Naive thymus-derived CD4-positive, alpha-beta T cell (primary cell): ENCODE measurements at regions of chr1 and their contacts with region 1.

Region 1: GRCh38 chr1:101112051-101112780 is 86.6 kb upstream of the DPH5 start:
- DNase-seq: peak; percentile 29 to 95 (median 91)
- ATAC-seq: peak; percentile 97
- H3K4me3 ChIP-seq: peak overlapping the region; percentile 33
- H3K4me3 Mint-ChIP-seq: peak overlapping the region; percentile 32 to 85 (median 78)
- H3K27ac ChIP-seq: peak overlapping the region; percentile 84
- H3K27ac Mint-ChIP-seq: peak overlapping the region; percentile 95 to 100 (median 99)
- H3K4me1 ChIP-seq: peaks cover 23 to 43% of the 10 kb centered on the region in 2 donors
- H3K4me1 Mint-ChIP-seq: peaks cover 32 to 79% (median 71%) of the 10 kb centered on the region in 7 donors
- H3K27me3 ChIP-seq: no peaks in the 10 kb centered on the region
- H3K27me3 Mint-ChIP-seq: no peaks in the 10 kb centered on the region

Region 2: GRCh38 chr1:100265931-100266740 is 846.1 kb before region 1 on chr1 and contains the start of gene RTCA:
- CTCF ChIA-PET with region 1: no interaction called
- POLR2A ChIA-PET with region 1: no interaction called
- intact Hi-C with region 1: no loop called
- DNase-seq: peak; percentile 91 to 95 (median 94)
- ATAC-seq: peak; percentile 98
- H3K4me3 ChIP-seq: peak within 1 kb of the TSS; percentile 88
- H3K4me3 Mint-ChIP-seq: peak within 1 kb of the TSS; percentile 97 to 100 (median 100)
- H3K27ac ChIP-seq: peak within 1 kb of the TSS; percentile 88
- H3K27ac Mint-ChIP-seq: peak within 1 kb of the TSS; percentile 94 to 99 (median 97)
- H3K4me1 ChIP-seq: peaks cover 25 to 26% of the 10 kb centered on the region in 2 donors
- H3K4me1 Mint-ChIP-seq: peaks cover 23 to 58% (median 51%) of the 10 kb centered on the region in 7 donors
- H3K27me3 ChIP-seq: no peaks in the 10 kb centered on the region
- H3K27me3 Mint-ChIP-seq: peaks cover 0 to 3% (median 0%) of the 10 kb centered on the region in 5 donors
- total RNA-seq, gene RTCA: 33.3 to 47.7 (median 35.8) TPM

Region 3: DNA sequence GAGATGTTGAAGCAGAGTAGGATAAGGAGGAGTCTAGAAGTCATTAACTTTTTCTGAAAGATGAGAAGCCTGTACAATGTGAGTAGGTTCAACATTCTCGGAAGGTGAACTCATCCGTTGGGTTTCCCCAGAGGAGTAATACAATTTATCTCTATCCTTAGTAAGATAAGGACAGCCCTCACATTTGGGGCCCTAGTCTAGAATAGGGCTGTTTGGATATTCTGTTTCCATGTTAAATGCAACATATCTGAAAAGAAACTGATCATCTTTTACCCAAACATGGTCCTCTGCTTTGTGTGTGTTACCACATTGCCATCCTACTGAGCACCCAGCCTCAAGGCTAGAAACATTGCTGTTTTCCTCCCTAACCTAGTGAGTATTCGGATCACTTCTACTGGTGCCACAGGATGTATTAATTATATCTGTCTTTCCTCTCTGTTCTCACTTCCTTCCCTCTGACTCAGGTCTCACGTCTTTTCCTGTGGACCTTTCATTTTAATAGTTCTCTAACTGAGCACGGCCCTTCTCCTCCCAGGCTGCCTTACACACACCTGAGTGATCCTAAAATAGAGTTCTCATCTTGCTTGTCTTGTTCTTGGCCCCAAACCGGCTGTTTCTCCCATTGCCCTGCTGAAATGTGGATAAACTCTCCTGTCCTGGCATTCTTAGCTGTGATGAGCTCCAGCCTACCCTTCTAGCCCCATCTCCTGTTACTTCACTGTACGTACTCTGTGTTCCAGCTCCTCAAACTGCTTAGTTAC is 668.2 kb before region 1 on chr1:
- CTCF ChIA-PET with region 1: no interaction called
- POLR2A ChIA-PET with region 1: no interaction called
- intact Hi-C with region 1: loop called in 1 of 2 experiments (anchors 5 kb)
- DNase-seq: peak in 5 of 9 donors; percentile 31 to 42 (median 36)
- ATAC-seq: peak; percentile 6
- H3K4me3 ChIP-seq: peak overlapping the region; percentile 12
- H3K4me3 Mint-ChIP-seq: peak overlapping the region; percentile 66 to 86 (median 81)
- H3K27ac ChIP-seq: peak overlapping the region; percentile 93
- H3K27ac Mint-ChIP-seq: peak overlapping the region; percentile 92 to 99 (median 98)
- H3K4me1 ChIP-seq: peaks cover 83 to 84% of the 10 kb centered on the region in 2 donors
- H3K4me1 Mint-ChIP-seq: peaks cover 53 to 95% (median 87%) of the 10 kb centered on the region in 7 donors
- H3K27me3 ChIP-seq: no peaks in the 10 kb centered on the region
- H3K27me3 Mint-ChIP-seq: no peaks in the 10 kb centered on the region

Region 4: DNA sequence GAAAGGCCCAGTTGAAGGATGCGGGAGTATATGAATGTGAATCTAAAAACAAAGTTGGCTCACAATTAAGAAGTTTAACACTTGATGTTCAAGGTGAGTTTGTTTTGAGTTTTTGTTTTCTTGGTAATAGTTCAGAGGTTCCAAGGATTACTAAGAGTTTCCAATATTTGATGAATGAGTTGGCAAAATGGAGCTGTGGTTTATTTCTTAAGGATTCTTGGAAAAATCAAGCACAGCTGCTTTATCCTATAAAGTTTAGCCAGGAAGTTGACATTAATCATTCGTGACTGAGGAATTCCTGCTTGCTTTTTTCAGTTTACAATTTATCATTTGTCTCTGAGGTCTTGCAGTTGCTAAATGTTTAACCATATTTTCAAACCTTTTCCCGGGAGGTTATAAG is 377.5 kb before region 1 on chr1:
- CTCF ChIA-PET with region 1: no interaction called
- POLR2A ChIA-PET with region 1: no interaction called
- intact Hi-C with region 1: no loop called
- DNase-seq: no peak
- ATAC-seq: no peak
- H3K4me3 ChIP-seq: no peak overlapping the region
- H3K4me3 Mint-ChIP-seq: no peak overlapping the region
- H3K27ac ChIP-seq: no peak overlapping the region
- H3K27ac Mint-ChIP-seq: no peak overlapping the region
- H3K4me1 ChIP-seq: no peaks in the 10 kb centered on the region
- H3K4me1 Mint-ChIP-seq: no peaks in the 10 kb centered on the region
- H3K27me3 ChIP-seq: no peaks in the 10 kb centered on the region
- H3K27me3 Mint-ChIP-seq: peaks cover 5 to 13% (median 8%) of the 10 kb centered on the region in 5 donors

Region 5: GRCh38 chr1:100928128-100928527 is 184.1 kb before region 1 on chr1:
- CTCF ChIA-PET with region 1: interaction called, 6 read pairs
- POLR2A ChIA-PET with region 1: interaction called, 13 read pairs
- intact Hi-C with region 1: loop called (anchors 1 to 2 kb)
- DNase-seq: peak in 1 of 9 donors; percentile 9
- ATAC-seq: peak; percentile 30
- H3K4me3 ChIP-seq: peak overlapping the region; percentile 15
- H3K4me3 Mint-ChIP-seq: no peak overlapping the region
- H3K27ac ChIP-seq: peak overlapping the region; percentile 74
- H3K27ac Mint-ChIP-seq: no peak overlapping the region
- H3K4me1 ChIP-seq: peaks cover 76 to 84% of the 10 kb centered on the region in 2 donors
- H3K4me1 Mint-ChIP-seq: peaks cover 26 to 61% (median 39%) of the 10 kb centered on the region in 7 donors
- H3K27me3 ChIP-seq: no peaks in the 10 kb centered on the region
- H3K27me3 Mint-ChIP-seq: no peaks in the 10 kb centered on the region

Region 6: GRCh38 chr1:101122452-101123166 is 10.4 kb after region 1 on chr1:
- CTCF ChIA-PET with region 1: interaction called, 11 read pairs
- POLR2A ChIA-PET with region 1: interaction called, 19 read pairs
- intact Hi-C with region 1: loop called (anchors 1 kb)
- DNase-seq: peak in 3 of 9 donors; percentile 19 to 32 (median 28)
- ATAC-seq: peak; percentile 66
- H3K4me3 ChIP-seq: no peak overlapping the region
- H3K4me3 Mint-ChIP-seq: peak overlapping the region; percentile 12 to 81 (median 59)
- H3K27ac ChIP-seq: peak overlapping the region; percentile 63
- H3K27ac Mint-ChIP-seq: peak overlapping the region; percentile 36 to 95 (median 91)
- H3K4me1 ChIP-seq: peaks cover 26 to 32% of the 10 kb centered on the region in 2 donors
- H3K4me1 Mint-ChIP-seq: peaks cover 28 to 83% (median 65%) of the 10 kb centered on the region in 7 donors
- H3K27me3 ChIP-seq: no peaks in the 10 kb centered on the region
- H3K27me3 Mint-ChIP-seq: peaks cover 0 to 4% (median 0%) of the 10 kb centered on the region in 5 donors

Region 7: GRCh38 chr1:101136739-101137138 is 24.5 kb after region 1 on chr1:
- CTCF ChIA-PET with region 1: interaction called, 4 read pairs
- POLR2A ChIA-PET with region 1: interaction called, 6 read pairs
- intact Hi-C with region 1: loop called in 1 of 2 experiments (anchors 1 kb)
- DNase-seq: peak in 7 of 9 donors; percentile 11 to 59 (median 45)
- ATAC-seq: peak; percentile 77
- H3K4me3 ChIP-seq: no peak overlapping the region
- H3K4me3 Mint-ChIP-seq: peak overlapping the region in 9 of 10 donors; percentile 23 to 62 (median 49)
- H3K27ac ChIP-seq: peak overlapping the region; percentile 19
- H3K27ac Mint-ChIP-seq: peak overlapping the region; percentile 67 to 93 (median 85)
- H3K4me1 ChIP-seq: peaks cover 17 to 32% of the 10 kb centered on the region in 2 donors
- H3K4me1 Mint-ChIP-seq: peaks cover 37 to 67% (median 66%) of the 10 kb centered on the region in 7 donors
- H3K27me3 ChIP-seq: no peaks in the 10 kb centered on the region
- H3K27me3 Mint-ChIP-seq: no peaks in the 10 kb centered on the region

Region 8: DNA sequence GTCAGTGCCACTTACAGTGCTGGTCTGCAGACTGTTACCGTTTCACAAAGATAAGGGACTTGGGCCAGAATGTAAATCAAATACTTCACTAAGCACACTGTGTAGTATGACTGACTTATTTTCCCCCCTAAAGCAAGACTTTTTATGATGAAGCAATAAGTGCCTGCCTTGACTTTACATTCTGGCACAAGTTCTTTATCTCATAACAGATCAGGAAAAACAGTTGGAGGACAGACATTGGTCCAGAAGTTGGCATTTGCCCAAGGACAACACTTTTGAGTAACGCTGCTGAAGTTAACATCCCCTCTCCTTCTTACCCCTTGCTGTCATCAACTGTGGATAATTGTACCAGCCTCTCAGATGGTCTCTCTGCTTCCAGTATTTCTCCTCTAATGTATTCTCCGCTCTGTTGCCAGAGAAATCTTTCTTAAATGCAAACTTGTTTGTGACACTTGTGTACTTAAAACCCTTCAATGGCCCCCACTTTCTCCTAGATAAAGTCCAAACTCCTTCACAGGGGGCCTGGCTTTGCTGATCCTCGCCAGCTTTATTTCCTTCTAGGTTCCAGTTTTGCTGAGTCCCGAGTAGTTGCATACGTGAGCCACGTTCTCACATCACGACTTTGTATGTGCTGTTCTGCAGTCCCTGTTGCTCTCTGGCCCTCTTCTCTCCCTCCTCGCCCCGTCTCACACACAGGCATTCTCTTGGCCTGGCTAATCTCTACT is 170.3 kb after region 1 on chr1:
- CTCF ChIA-PET with region 1: interaction called, 6 read pairs
- POLR2A ChIA-PET with region 1: interaction called, 5 read pairs
- intact Hi-C with region 1: loop called in 1 of 2 experiments (anchors 1 kb)
- DNase-seq: no peak
- ATAC-seq: no peak
- H3K4me3 ChIP-seq: no peak overlapping the region
- H3K4me3 Mint-ChIP-seq: peak overlapping the region in 7 of 10 donors; percentile 11 to 94 (median 84)
- H3K27ac ChIP-seq: peak overlapping the region; percentile 77
- H3K27ac Mint-ChIP-seq: peak overlapping the region in 8 of 9 donors; percentile 85 to 99 (median 98)
- H3K4me1 ChIP-seq: peaks cover 92 to 95% of the 10 kb centered on the region in 2 donors
- H3K4me1 Mint-ChIP-seq: peaks cover 67 to 96% (median 95%) of the 10 kb centered on the region in 7 donors
- H3K27me3 ChIP-seq: no peaks in the 10 kb centered on the region
- H3K27me3 Mint-ChIP-seq: peaks cover 0 to 2% (median 0%) of the 10 kb centered on the region in 5 donors

Region 9: GRCh38 chr1:101298663-101299062 is 186.4 kb after region 1 on chr1:
- CTCF ChIA-PET with region 1: no interaction called
- POLR2A ChIA-PET with region 1: no interaction called
- intact Hi-C with region 1: no loop called
- DNase-seq: no peak
- ATAC-seq: peak; percentile 62
- H3K4me3 ChIP-seq: no peak overlapping the region
- H3K4me3 Mint-ChIP-seq: no peak overlapping the region
- H3K27ac ChIP-seq: no peak overlapping the region
- H3K27ac Mint-ChIP-seq: peak overlapping the region in 1 of 9 donors; percentile 5
- H3K4me1 ChIP-seq: peaks cover 0 to 1% of the 10 kb centered on the region in 2 donors
- H3K4me1 Mint-ChIP-seq: peaks cover 2 to 33% (median 16%) of the 10 kb centered on the region in 7 donors
- H3K27me3 ChIP-seq: no peaks in the 10 kb centered on the region
- H3K27me3 Mint-ChIP-seq: peaks cover 0 to 24% (median 0%) of the 10 kb centered on the region in 5 donors